GM12878 (cell line): ENCODE measurements at regions of chr17 and their contacts with region 1.

Region 1: DNA sequence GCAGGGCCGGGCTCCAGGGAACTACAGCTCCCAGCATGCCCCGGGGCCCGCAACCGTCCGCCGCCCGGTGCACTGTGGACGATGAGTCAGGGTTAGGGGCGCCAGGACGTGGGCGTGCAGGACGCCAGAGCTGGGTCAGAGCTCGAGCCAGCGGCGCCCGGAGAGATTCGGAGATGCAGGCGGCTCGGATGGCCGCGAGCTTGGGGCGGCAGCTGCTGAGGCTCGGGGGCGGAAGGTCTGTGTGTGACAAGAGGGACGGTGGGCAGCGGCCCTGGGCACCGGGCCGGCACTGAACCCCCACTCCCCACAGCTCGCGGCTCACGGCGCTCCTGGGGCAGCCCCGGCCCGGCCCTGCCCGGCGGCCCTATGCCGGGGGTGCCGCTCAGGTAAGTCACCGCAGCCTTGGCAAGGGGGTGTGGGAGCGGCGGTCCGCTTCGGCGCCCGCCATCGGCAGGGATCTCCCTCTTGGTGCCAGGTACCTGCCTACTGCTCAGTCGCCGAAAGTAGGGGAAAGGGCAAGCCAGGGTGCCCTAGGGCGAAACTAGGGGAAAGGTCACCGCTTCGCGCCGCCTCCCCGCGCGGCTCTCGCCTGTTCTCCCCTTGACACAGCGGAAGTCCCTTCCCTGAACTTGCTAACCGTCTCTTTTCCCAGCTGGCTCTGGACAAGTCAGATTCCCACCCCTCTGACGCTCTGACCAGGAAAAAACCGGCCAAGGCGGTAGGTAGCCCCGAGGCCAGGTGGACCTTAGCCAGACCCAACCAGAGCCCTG is at the starts of genes ACADVL and DLG4:
- DNase-seq: no peak
- ATAC-seq: peak; percentile 86
- H3K4me3 ChIP-seq: peak within 1 kb of the TSS; percentile 81
- H3K27ac ChIP-seq: peak within 1 kb of the TSS; percentile 92
- H3K4me1 ChIP-seq: peaks cover 12% of the 10 kb centered on the region
- H3K27me3 ChIP-seq: no peaks in the 10 kb centered on the region
- CTCF ChIP-seq: no peak
- EP300 ChIP-seq: no peak
- POLR2A ChIP-seq: peak; percentile 88
- RAD21 ChIP-seq: no peak
- polyA plus RNA-seq, gene ACADVL: 25.4 to 73.1 TPM
- polyA plus RNA-seq, gene DLG4: 0.07 to 0.43 TPM

Region 2: GRCh38 chr17:7021993-7022778 is 197.8 kb before region 1 on chr17:
- CTCF ChIA-PET with region 1: no interaction called
- POLR2A ChIA-PET with region 1: interaction called, 10 read pairs
- RAD21 ChIA-PET with region 1: no interaction called
- SMC1A ChIA-PET with region 1: no interaction called
- in situ Hi-C with region 1: no loop called
- intact Hi-C with region 1: no loop called
- DNase-seq: no peak
- ATAC-seq: peak; percentile 86
- H3K4me3 ChIP-seq: peak overlapping the region; percentile 40; the same call in 1 of the 2 replicates
- H3K27ac ChIP-seq: peak overlapping the region; percentile 18; the same call in 1 of the 2 replicates
- H3K4me1 ChIP-seq: peaks cover 25% of the 10 kb centered on the region
- H3K27me3 ChIP-seq: no peaks in the 10 kb centered on the region
- CTCF ChIP-seq: peak; percentile 93 to 96 (median 96)
- EP300 ChIP-seq: no peak
- POLR2A ChIP-seq: peak; percentile 31; the same call in 1 of the 2 replicates
- RAD21 ChIP-seq: peak; percentile 72

Region 3: GRCh38 chr17:7122381-7122780 is 97.6 kb before region 1 on chr17:
- CTCF ChIA-PET with region 1: no interaction called
- POLR2A ChIA-PET with region 1: no interaction called
- RAD21 ChIA-PET with region 1: no interaction called
- SMC1A ChIA-PET with region 1: no interaction called
- in situ Hi-C with region 1: no loop called
- intact Hi-C with region 1: no loop called
- DNase-seq: no peak
- ATAC-seq: peak; percentile 56
- H3K4me3 ChIP-seq: 0 out of 2 replicates have a peak overlapping the region, but pooled peaks have one; percentile 10
- H3K27ac ChIP-seq: peak overlapping the region; percentile 22; the same call in 1 of the 2 replicates
- H3K4me1 ChIP-seq: peaks cover 15% of the 10 kb centered on the region
- H3K27me3 ChIP-seq: no peaks in the 10 kb centered on the region
- CTCF ChIP-seq: no peak
- EP300 ChIP-seq: no peak
- POLR2A ChIP-seq: no peak
- RAD21 ChIP-seq: no peak

Region 4: DNA sequence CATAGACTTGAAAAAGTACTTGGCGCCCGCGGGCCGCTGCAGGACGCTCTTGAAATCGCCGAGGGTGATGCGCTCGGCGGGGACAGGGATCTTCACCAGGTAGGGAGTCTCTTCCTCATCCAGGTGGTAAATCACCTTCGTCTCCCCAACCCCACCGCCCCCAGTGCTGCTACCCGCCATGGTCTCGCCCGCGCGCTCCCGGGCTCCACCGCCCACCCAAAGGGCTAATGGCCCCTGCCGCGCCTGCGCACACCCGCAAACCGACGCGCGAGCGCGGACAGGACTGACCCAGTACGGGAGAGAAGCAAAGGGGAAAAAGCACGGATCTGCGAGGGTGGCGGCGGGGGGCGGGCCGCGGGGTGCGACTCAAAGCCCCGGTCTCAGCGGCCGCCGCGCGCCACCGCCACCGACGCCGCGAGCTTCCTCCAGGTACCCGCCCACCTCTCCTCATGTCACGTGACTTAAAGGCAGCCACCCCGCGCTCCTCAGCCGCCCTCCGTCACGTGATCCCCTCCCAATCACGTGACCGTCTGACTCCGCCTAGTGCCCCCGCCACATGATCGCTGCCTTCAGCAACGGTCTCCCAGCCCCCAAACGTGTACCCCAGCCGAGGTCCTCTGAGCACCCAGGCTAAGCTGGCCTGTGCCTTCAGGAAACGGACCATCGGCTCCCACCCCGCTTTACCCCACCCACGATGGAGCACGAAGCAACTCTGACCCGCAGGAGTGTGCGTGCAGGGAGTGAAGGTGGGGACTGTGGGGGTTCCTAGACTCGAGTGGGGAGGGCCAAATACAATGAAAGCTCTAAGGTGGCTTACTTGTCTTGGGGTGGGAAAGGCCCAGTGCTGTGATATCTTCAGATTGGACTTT is 14.3 kb after region 1 on chr17 and contains the start of gene DVL2:
- CTCF ChIA-PET with region 1: interaction called, 70 read pairs
- POLR2A ChIA-PET with region 1: interaction called, 60 read pairs
- RAD21 ChIA-PET with region 1: interaction called, 51 read pairs
- SMC1A ChIA-PET with region 1: interaction called, 13 read pairs
- in situ Hi-C with region 1: no loop called
- intact Hi-C with region 1: loop called (anchors 2 kb)
- DNase-seq: peak; percentile 79
- ATAC-seq: peak; percentile 63
- H3K4me3 ChIP-seq: peak within 1 kb of the TSS; percentile 84
- H3K27ac ChIP-seq: peak within 1 kb of the TSS; percentile 86
- H3K4me1 ChIP-seq: peaks cover 20% of the 10 kb centered on the region
- H3K27me3 ChIP-seq: no peaks in the 10 kb centered on the region
- CTCF ChIP-seq: no peak
- EP300 ChIP-seq: no peak
- POLR2A ChIP-seq: peak; percentile 95
- RAD21 ChIP-seq: no peak
- polyA plus RNA-seq, gene DVL2: 0.97 to 2.7 TPM

Region 5: DNA sequence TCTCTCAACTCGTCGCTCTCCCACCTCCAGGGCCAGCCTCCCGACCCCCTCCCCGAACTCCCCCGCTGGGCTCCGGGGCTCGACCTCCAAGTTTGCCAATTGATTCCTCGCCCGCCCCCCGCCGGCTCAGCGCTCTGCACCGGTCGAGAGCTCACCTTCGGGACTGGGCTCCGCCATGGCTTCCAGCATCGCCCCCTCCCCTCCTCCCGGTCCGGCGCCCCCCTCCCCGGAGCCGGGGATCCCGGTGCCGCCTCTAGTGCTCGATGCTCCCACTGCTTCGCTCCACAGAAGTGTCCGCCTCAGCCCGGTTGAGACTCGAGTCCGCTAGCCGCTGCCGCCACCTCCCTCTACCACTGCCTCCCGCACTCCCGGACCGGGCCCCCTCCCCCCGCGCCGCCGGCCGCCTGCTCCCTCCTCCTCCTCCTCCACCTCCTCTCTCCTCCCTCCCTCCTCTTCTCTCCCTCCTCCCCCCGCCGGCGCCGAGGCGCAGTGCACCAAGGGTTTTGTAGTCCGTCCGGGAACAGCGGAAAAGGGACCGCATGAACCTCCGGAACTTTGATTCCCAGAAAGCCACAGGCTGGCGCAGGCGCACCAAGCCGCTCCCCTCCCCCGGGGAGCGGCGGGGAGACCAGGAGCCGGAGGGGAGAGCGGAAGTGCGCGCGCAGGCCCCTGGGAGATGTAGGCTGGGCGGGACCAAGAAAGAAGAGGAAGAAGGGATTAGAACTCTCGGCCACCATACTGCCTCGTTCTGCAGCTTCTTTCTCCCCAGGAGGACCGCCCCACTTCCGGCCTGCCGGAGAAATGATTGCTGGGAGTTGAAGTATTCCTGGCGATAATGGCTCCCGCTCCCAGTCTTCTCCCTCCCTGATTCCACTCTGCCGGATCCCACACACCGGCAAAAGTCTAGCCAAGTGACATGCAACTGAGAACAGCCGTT is 19.4 kb after region 1 on chr17 and contains the start of gene PHF23:
- CTCF ChIA-PET with region 1: interaction called, 70 read pairs
- POLR2A ChIA-PET with region 1: interaction called, 60 read pairs
- RAD21 ChIA-PET with region 1: interaction called, 51 read pairs
- SMC1A ChIA-PET with region 1: interaction called, 34 read pairs
- in situ Hi-C with region 1: no loop called
- intact Hi-C with region 1: loop called (anchors 2 kb)
- DNase-seq: peak; percentile 97
- ATAC-seq: peak; percentile 69
- H3K4me3 ChIP-seq: peak within 1 kb of the TSS; percentile 96
- H3K27ac ChIP-seq: peak within 1 kb of the TSS; percentile 87
- H3K4me1 ChIP-seq: peaks cover 29% of the 10 kb centered on the region
- H3K27me3 ChIP-seq: no peaks in the 10 kb centered on the region
- CTCF ChIP-seq: no peak
- EP300 ChIP-seq: peak in 1 of 2 experiments; percentile 14; a peak in 1 of 4 replicates
- POLR2A ChIP-seq: peak; percentile 70
- RAD21 ChIP-seq: no peak
- polyA plus RNA-seq, gene PHF23: 8.2 to 17.7 TPM

Region 6: DNA sequence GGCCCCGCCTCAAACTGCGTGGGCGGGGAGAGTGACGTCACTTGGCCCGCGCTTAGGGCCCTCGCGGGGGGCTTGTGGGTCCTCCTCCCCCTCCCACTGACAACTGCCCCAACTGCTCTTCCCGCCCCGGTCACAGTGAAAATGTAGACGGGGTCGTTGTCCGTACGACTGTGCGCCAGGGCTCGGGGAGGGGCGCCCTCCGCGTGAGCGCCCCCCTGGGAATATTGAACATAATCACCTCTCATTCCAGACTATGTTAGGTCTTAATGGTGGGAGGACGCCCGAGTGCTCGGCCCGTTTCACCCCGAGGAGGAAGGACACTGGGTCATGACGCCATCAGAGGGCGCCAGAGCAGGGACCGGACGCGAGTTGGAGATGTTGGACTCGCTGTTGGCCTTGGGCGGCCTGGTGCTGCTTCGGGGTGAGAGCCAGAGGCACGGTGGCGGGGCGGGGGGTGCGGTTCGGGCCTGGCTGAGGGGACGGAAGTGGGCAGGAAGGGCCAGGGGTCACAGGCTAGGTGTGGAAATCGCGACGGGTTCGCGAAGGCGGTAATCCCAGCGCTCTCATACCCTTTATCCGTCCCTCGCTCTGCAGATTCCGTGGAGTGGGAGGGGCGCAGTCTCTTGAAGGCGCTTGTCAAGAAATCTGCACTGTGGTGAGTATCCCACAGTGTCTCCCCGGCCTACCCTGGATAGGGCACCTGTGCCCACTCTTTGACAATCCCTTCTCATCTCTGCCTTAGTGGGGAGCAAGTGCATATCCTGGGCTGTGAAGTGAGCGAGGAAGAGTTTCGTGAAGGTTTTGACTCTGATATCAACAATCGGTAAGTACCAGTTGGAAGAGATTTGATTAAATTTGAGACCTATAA is 32.4 kb after region 1 on chr17 and contains the start of gene ELP5:
- CTCF ChIA-PET with region 1: interaction called, 18 read pairs
- POLR2A ChIA-PET with region 1: interaction called, 29 read pairs
- RAD21 ChIA-PET with region 1: interaction called, 11 read pairs
- SMC1A ChIA-PET with region 1: interaction called, 16 read pairs
- in situ Hi-C with region 1: no loop called
- intact Hi-C with region 1: loop called (anchors 2 kb)
- DNase-seq: peak; percentile 82
- ATAC-seq: peak; percentile 76
- H3K4me3 ChIP-seq: peak within 1 kb of the TSS; percentile 90
- H3K27ac ChIP-seq: peak within 1 kb of the TSS; percentile 99
- H3K4me1 ChIP-seq: peaks cover 10% of the 10 kb centered on the region
- H3K27me3 ChIP-seq: no peaks in the 10 kb centered on the region
- CTCF ChIP-seq: peak; percentile 11 to 42 (median 37); a peak in 3 of 6 replicates
- EP300 ChIP-seq: no peak
- POLR2A ChIP-seq: peak; percentile 98
- RAD21 ChIP-seq: no peak
- polyA plus RNA-seq, gene ELP5: 81.8 to 94.7 TPM

Region 7: GRCh38 chr17:7296189-7296902 is 76.3 kb after region 1 on chr17:
- CTCF ChIA-PET with region 1: interaction called, 60 read pairs
- POLR2A ChIA-PET with region 1: interaction called, 3 read pairs
- RAD21 ChIA-PET with region 1: interaction called, 44 read pairs
- SMC1A ChIA-PET with region 1: interaction called, 19 read pairs
- in situ Hi-C with region 1: no loop called
- intact Hi-C with region 1: no loop called
- DNase-seq: no peak
- ATAC-seq: peak; percentile 89
- H3K4me3 ChIP-seq: peak overlapping the region; percentile 11; the same call in 1 of the 2 replicates
- H3K27ac ChIP-seq: no peak overlapping the region
- H3K4me1 ChIP-seq: peaks cover 3% of the 10 kb centered on the region
- H3K27me3 ChIP-seq: peaks cover 3 to 5% of the 10 kb centered on the region in 2 experiments
- CTCF ChIP-seq: peak; percentile 84 to 93 (median 86); a peak in 5 of 6 replicates
- EP300 ChIP-seq: no peak
- POLR2A ChIP-seq: no peak
- RAD21 ChIP-seq: peak; percentile 74